GM12878 (cell line): ENCODE measurements at regions of chr9 and their contacts with region 1.

Region 1: GRCh38 chr9:15231788-15232635 is 75.0 kb downstream of the TTC39B start:
- DNase-seq: no peak
- ATAC-seq: peak; percentile 81
- H3K4me3 ChIP-seq: no peak overlapping the region
- H3K27ac ChIP-seq: no peak overlapping the region
- H3K4me1 ChIP-seq: no peaks in the 10 kb centered on the region
- H3K27me3 ChIP-seq: no peaks in the 10 kb centered on the region
- CTCF ChIP-seq: peak; percentile 69 to 86 (median 80)
- EP300 ChIP-seq: no peak
- POLR2A ChIP-seq: no peak
- RAD21 ChIP-seq: peak; percentile 58

Region 2: DNA sequence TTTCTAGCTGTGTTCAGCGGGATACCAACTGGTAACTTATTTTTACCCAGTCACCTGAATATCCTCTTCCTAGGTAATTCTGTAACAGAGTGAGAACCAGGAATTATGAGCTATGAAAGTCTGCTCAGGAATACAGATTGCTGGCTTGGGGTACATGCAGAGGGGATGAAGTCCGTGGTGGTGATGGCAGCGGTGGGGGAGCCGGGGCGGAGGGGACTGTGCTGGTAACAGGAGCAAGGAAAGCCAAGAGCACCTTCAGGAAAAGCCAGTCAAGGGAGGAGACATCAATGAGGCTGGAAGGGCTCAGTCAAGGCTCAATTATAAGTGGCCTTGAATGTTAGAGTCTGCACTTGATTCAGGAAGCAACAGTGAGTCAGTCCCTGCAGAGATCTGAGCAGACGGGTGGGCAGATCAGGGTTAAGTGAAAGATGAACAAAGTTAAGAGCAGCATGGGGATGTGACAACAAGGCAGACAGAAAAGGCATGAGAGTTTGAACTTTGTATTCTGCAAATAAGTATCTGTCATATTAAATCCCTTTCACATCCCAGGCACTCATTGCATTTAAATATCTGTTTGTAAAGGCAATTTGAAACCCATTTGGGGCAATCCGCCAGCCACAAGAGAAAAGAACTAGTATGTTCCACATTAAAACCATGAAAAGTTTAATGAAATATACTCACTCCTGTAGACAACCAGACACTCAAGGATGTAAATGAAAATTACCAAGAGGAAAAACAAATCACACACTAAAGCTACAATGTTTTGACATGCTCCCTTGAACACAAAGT is 26.2 kb before region 1 on chr9:
- CTCF ChIA-PET with region 1: interaction called, 149 read pairs
- POLR2A ChIA-PET with region 1: interaction called, 3 read pairs
- RAD21 ChIA-PET with region 1: interaction called, 10 read pairs
- SMC1A ChIA-PET with region 1: interaction called, 19 read pairs
- in situ Hi-C with region 1: no loop called
- intact Hi-C with region 1: loop called (anchors 1 kb)
- DNase-seq: no peak
- ATAC-seq: no peak
- H3K4me3 ChIP-seq: no peak overlapping the region
- H3K27ac ChIP-seq: no peak overlapping the region
- H3K4me1 ChIP-seq: no peaks in the 10 kb centered on the region
- H3K27me3 ChIP-seq: no peaks in the 10 kb centered on the region
- CTCF ChIP-seq: no peak
- EP300 ChIP-seq: no peak
- POLR2A ChIP-seq: no peak
- RAD21 ChIP-seq: no peak

Region 3: DNA sequence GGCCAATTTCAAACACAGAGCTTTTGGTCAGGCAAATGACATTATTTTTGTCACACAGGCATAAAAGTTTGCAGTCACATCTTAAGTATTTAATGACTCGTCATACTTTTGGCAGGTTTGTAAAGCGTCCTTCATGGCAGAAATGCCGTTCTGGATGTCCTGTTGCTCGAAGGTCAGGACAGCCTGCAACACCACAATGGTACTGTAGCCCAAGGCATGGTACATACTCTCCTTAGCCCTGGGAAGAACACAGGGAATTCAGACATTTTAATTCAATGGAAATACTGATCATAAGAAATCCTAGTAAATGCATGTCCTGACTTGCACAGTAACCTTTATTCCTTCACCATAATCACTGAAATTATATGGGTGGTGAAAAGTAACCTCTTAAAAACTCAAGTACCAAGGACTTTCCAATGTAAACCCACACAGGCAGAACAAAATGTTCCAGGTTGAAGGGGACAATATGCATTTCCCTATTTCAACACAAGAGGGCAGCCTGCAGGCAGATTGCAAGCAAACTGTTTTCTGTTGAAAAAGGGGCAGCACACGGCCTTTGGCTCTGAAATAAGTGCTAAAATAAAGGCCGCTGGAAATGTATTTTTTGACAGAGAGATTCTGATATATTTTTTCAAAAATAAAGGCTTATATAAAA is 20.7 kb before region 1 on chr9:
- CTCF ChIA-PET with region 1: interaction called, 149 read pairs
- POLR2A ChIA-PET with region 1: interaction called, 8 read pairs
- RAD21 ChIA-PET with region 1: interaction called, 26 read pairs
- SMC1A ChIA-PET with region 1: interaction called, 19 read pairs
- in situ Hi-C with region 1: no loop called
- intact Hi-C with region 1: loop called (anchors 1 kb)
- DNase-seq: peak; percentile 30
- ATAC-seq: peak; percentile 86
- H3K4me3 ChIP-seq: no peak overlapping the region
- H3K27ac ChIP-seq: no peak overlapping the region
- H3K4me1 ChIP-seq: no peaks in the 10 kb centered on the region
- H3K27me3 ChIP-seq: no peaks in the 10 kb centered on the region
- CTCF ChIP-seq: peak; percentile 81 to 87 (median 85); a peak in 5 of 6 replicates
- EP300 ChIP-seq: no peak
- POLR2A ChIP-seq: no peak
- RAD21 ChIP-seq: peak; percentile 86

Region 4: DNA sequence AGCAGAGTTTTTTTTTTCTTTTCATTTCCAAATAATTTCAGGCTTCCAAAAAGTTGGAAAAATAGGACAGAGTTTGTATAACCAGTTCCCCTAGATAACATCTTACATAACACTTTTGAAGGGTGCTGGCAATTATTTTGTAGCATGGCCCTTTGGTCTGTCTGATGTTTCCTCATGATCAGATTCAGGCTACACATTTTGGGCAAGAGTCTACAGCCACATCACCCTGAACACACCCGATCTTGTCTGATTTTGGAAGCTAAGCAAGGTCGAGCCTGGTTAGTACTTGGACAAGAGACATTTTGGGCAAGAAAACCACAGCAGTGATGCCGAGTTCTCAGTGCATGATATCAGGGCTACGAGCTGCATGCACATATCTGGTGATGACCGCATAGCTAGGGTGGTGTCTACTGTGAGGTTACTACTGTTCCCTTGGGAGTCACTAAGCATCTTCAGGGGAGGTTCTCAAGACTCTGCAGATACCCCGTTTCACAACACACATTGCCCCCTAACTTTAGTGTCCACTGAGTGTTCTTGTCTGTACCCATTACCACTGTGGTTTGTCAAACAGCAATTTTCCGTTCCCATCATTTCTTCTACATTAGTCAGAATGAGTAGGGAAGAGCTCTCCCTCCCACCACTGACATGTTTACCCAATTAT is 11.2 kb before region 1 on chr9:
- CTCF ChIA-PET with region 1: interaction called, 34 read pairs
- POLR2A ChIA-PET with region 1: no interaction called
- RAD21 ChIA-PET with region 1: interaction called, 5 read pairs
- SMC1A ChIA-PET with region 1: interaction called, 8 read pairs
- in situ Hi-C with region 1: no loop called
- intact Hi-C with region 1: no loop called
- DNase-seq: no peak
- ATAC-seq: no peak
- H3K4me3 ChIP-seq: no peak overlapping the region
- H3K27ac ChIP-seq: no peak overlapping the region
- H3K4me1 ChIP-seq: no peaks in the 10 kb centered on the region
- H3K27me3 ChIP-seq: no peaks in the 10 kb centered on the region
- CTCF ChIP-seq: no peak
- EP300 ChIP-seq: no peak
- POLR2A ChIP-seq: no peak
- RAD21 ChIP-seq: no peak